A673 (cell line): ENCODE measurements at regions of chr9 and their contacts with region 1.

Region 1: GRCh38 chr9:84397151-84397728 is 56.7 kb upstream of the SLC28A3 start:
- DNase-seq: peak; percentile 73
- H3K4me3 ChIP-seq: no peak overlapping the region
- H3K27ac ChIP-seq: no peak overlapping the region
- H3K4me1 ChIP-seq: peaks cover 3% of the 10 kb centered on the region
- H3K27me3 ChIP-seq: no peaks in the 10 kb centered on the region
- CTCF ChIP-seq: peak; percentile 86

Region 2: GRCh38 chr9:83106263-83106662 is 1291.0 kb before region 1 on chr9:
- CTCF ChIA-PET with region 1: no interaction called
- POLR2A ChIA-PET with region 1: no interaction called
- intact Hi-C with region 1: no loop called
- DNase-seq: no peak
- H3K4me3 ChIP-seq: no peak overlapping the region
- H3K27ac ChIP-seq: no peak overlapping the region
- H3K4me1 ChIP-seq: no peaks in the 10 kb centered on the region
- H3K27me3 ChIP-seq: no peaks in the 10 kb centered on the region
- CTCF ChIP-seq: no peak

Region 3: GRCh38 chr9:84600739-84601138 is 203.5 kb after region 1 on chr9:
- CTCF ChIA-PET with region 1: interaction called, 11 read pairs
- POLR2A ChIA-PET with region 1: no interaction called
- intact Hi-C with region 1: no loop called
- DNase-seq: no peak
- H3K4me3 ChIP-seq: no peak overlapping the region
- H3K27ac ChIP-seq: no peak overlapping the region
- H3K4me1 ChIP-seq: no peaks in the 10 kb centered on the region
- H3K27me3 ChIP-seq: peaks cover 22% of the 10 kb centered on the region
- CTCF ChIP-seq: no peak

Region 4: GRCh38 chr9:84781458-84781857 is 384.2 kb after region 1 on chr9:
- CTCF ChIA-PET with region 1: interaction called, 5 read pairs
- POLR2A ChIA-PET with region 1: no interaction called
- intact Hi-C with region 1: loop called (anchors 5 kb)
- DNase-seq: peak; percentile 42
- H3K4me3 ChIP-seq: no peak overlapping the region
- H3K27ac ChIP-seq: no peak overlapping the region
- H3K4me1 ChIP-seq: no peaks in the 10 kb centered on the region
- H3K27me3 ChIP-seq: peaks cover 23% of the 10 kb centered on the region
- CTCF ChIP-seq: peak; percentile 59

Region 5: GRCh38 chr9:85142968-85143367 is 745.7 kb after region 1 on chr9:
- CTCF ChIA-PET with region 1: interaction called, 3 read pairs
- POLR2A ChIA-PET with region 1: no interaction called
- intact Hi-C with region 1: loop called (anchors 5 kb)
- DNase-seq: peak; percentile 33
- H3K4me3 ChIP-seq: no peak overlapping the region
- H3K27ac ChIP-seq: no peak overlapping the region
- H3K4me1 ChIP-seq: no peaks in the 10 kb centered on the region
- H3K27me3 ChIP-seq: peaks cover 3% of the 10 kb centered on the region
- CTCF ChIP-seq: peak; percentile 56

Region 6: DNA sequence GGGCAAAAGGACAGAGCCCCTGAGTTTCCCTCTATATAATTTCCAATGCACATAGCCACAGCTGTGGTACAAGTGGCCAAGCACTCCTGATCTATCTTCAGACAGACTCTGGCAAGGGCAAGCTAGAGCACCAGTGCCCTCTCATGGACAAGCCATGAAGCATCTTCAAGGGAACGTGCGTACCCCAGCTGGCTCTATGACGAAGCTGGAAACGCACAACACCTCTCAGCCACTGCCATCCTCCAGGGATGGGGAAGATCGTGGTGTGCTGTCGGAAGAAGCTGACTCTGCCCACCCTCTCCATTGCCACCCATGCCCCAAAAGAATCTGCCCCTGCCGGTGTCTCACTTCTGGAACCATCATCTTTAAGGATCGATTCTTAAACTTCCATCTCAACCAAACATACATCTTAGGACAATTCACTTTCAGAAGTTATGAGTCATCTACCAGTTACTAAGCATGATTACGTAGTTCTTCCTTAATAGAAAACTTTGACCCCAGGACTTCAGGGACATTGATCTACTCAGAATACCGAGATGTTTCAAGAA is 861.7 kb after region 1 on chr9:
- CTCF ChIA-PET with region 1: interaction called, 9 read pairs
- POLR2A ChIA-PET with region 1: no interaction called
- intact Hi-C with region 1: loop called (anchors 5 kb)
- DNase-seq: peak; percentile 61
- H3K4me3 ChIP-seq: no peak overlapping the region
- H3K27ac ChIP-seq: no peak overlapping the region
- H3K4me1 ChIP-seq: no peaks in the 10 kb centered on the region
- H3K27me3 ChIP-seq: peaks cover 6% of the 10 kb centered on the region
- CTCF ChIP-seq: peak; percentile 63

Region 7: GRCh38 chr9:85425153-85425611 is 1027.9 kb after region 1 on chr9:
- CTCF ChIA-PET with region 1: no interaction called
- POLR2A ChIA-PET with region 1: no interaction called
- intact Hi-C with region 1: loop called (anchors 5 kb)
- DNase-seq: peak; percentile 79
- H3K4me3 ChIP-seq: no peak overlapping the region
- H3K27ac ChIP-seq: no peak overlapping the region
- H3K4me1 ChIP-seq: no peaks in the 10 kb centered on the region
- H3K27me3 ChIP-seq: peaks cover 34% of the 10 kb centered on the region
- CTCF ChIP-seq: peak; percentile 92

Region 8: DNA sequence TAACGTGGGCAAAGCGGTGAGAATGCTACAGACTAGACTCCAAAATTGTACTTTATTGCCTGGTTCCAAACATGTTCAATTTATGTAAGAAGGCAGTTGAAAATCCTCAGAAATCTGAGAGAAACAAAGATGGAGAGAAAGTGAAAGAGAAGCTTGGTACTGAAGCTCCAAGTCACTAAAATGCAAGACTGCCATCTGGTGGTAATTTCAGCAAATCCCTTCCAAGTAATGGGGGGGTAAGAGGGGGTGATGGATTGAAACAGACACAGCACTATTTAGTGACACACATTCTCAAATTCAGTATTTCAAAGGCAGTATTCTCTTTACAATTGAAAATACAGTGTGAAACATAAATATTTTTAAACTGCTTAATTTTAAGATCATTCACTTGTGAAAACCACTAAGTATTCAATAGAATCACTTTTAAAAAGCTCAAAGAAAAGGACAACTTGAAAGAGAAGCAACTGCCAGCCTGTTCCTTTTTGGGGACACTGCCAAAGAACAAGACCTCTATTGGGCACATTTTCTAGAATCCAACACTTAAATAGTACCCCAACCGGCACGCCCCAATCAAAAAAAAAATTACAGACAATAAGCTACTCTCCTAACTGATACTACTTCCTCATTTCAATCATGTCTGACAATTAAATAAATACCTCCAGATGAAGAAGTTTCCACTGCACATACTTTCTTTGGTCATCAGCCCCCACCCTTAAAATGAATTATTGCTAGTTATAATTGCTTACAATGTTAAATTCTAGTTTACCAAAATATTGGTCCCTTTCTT is 1213.0 kb after region 1 on chr9:
- CTCF ChIA-PET with region 1: interaction called, 11 read pairs
- POLR2A ChIA-PET with region 1: no interaction called
- intact Hi-C with region 1: loop called (anchors 1 kb)
- DNase-seq: peak; percentile 75
- H3K4me3 ChIP-seq: peak overlapping the region; percentile 27
- H3K27ac ChIP-seq: no peak overlapping the region
- H3K4me1 ChIP-seq: no peaks in the 10 kb centered on the region
- H3K27me3 ChIP-seq: no peaks in the 10 kb centered on the region
- CTCF ChIP-seq: peak; percentile 86